Endothelial cell of umbilical vein (primary cell): ENCODE measurements at regions of chr3 and their contacts with region 1.

Region 1: GRCh38 chr3:78204977-78205376 is 1165.1 kb downstream of the ROBO2 start:
- DNase-seq: peak; percentile 65
- H3K4me3 ChIP-seq: no peak overlapping the region
- H3K27ac ChIP-seq: peak overlapping the region; percentile 10
- H3K4me1 ChIP-seq: peaks cover 4% of the 10 kb centered on the region
- H3K27me3 ChIP-seq: no peaks in the 10 kb centered on the region
- CTCF ChIP-seq: peak; percentile 9 to 37
- POLR2A ChIP-seq: no peak

Region 2: DNA sequence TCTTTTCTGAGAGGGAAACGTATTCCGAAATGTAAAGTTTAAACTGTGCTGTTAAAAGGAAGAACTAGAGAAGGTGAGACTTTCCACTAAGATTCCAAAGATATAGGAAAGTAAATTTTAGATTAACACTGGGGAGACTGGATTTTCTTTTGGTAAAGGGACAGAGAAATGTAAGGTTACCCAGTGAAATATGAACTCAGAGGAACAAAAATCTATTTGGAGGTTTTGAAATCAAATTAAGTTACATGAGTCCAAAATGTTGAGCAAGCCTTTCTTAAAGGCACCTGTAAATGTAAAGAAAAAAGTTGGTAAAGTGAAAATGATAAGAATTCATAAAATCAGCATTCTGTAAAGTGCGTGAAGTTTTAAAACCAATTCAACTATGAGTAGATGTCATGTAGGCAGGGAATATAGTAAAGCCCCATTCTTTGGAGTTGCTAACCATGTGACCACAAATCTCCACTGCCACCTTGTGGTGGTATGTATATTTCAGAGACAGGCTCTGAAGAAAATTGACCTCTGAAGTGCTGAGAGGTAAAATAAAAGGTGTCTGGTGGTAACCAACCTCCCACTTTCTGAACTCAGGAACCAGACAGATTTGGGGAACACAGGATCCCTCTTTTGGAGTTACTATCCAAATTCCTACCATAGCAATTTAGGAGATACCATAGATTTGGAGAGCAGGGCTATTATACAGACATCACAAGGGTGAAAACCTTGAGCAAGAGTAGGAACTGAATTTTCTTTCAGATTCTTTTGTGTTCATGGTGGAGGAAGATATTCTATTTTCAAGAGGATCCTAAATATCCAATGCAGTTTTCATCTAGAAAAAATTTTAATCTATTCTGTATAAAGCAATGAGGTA is 949.8 kb before region 1 on chr3:
- CTCF ChIA-PET with region 1: no interaction called
- POLR2A ChIA-PET with region 1: no interaction called
- dilution Hi-C with region 1: no loop called
- intact Hi-C with region 1: loop called (anchors 5 kb)
- DNase-seq: peak; percentile 26
- H3K4me3 ChIP-seq: no peak overlapping the region
- H3K27ac ChIP-seq: no peak overlapping the region
- H3K4me1 ChIP-seq: no peaks in the 10 kb centered on the region
- H3K27me3 ChIP-seq: no peaks in the 10 kb centered on the region
- CTCF ChIP-seq: peak; percentile 44 to 47
- POLR2A ChIP-seq: no peak

Region 3: DNA sequence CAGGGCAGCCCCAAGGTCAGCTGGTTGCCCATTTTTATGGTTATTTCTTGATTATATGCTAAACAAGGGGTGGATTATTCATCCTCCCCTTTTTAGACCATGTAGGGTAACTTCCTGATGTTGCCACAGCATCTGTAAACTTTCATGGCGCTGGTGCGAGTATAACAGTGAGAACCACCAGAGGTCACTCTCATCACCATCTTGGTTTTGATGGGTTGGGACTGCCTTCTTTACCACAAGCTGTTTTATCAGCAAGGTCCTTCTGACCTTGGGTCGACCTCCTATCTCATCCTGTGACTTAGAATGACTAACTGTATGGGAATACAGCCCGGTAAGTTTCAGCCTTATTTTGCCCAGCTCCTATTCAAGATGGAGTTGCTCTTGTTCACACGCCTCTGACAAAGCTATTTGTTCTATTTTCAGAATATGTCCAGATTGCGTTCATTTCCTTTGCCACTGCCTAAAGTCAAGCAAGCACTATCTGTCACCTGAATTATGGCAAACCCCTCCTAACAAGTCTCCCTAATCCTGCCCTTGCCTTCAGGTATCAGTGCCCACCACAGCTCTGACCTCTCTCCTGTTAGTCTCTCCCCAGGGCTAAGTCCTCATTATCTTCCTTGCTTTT is 856.6 kb before region 1 on chr3:
- CTCF ChIA-PET with region 1: interaction called, 48 read pairs
- POLR2A ChIA-PET with region 1: no interaction called
- dilution Hi-C with region 1: no loop called
- intact Hi-C with region 1: loop called (anchors 1 kb)
- DNase-seq: peak; percentile 9
- H3K4me3 ChIP-seq: no peak overlapping the region
- H3K27ac ChIP-seq: no peak overlapping the region
- H3K4me1 ChIP-seq: no peaks in the 10 kb centered on the region
- H3K27me3 ChIP-seq: no peaks in the 10 kb centered on the region
- CTCF ChIP-seq: peak; percentile 25 to 27
- POLR2A ChIP-seq: no peak

Region 4: DNA sequence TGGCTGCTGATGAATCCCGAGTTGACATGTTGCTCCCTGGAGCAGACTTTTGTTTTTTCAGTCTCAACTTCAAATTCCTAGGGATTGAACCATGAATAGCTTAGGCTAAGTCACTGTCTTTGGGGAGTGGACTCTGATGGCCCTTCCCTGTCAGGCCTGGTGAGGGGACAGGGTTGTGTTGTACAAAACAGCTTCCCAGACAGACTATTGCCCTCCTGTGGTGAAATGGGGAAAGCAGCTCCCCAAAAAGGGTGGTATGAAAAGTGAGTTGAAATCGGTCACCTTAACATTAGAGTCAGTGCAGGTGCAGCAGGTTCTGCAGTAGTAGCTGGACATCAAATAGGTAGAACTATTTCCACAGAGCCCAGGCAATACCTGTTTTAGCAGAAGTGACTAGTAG is 389.5 kb before region 1 on chr3:
- CTCF ChIA-PET with region 1: no interaction called
- POLR2A ChIA-PET with region 1: no interaction called
- dilution Hi-C with region 1: no loop called
- intact Hi-C with region 1: loop called (anchors 5 kb)
- DNase-seq: no peak
- H3K4me3 ChIP-seq: no peak overlapping the region
- H3K27ac ChIP-seq: no peak overlapping the region
- H3K4me1 ChIP-seq: peaks cover 7% of the 10 kb centered on the region
- H3K27me3 ChIP-seq: no peaks in the 10 kb centered on the region
- CTCF ChIP-seq: peak in 1 of 2 donors; percentile 6
- POLR2A ChIP-seq: no peak

Region 5: GRCh38 chr3:78139166-78139565 is 65.8 kb before region 1 on chr3:
- CTCF ChIA-PET with region 1: interaction called, 10 read pairs
- POLR2A ChIA-PET with region 1: interaction called, 3 read pairs
- dilution Hi-C with region 1: no loop called
- intact Hi-C with region 1: loop called (anchors 1 kb)
- DNase-seq: peak; percentile 71
- H3K4me3 ChIP-seq: no peak overlapping the region
- H3K27ac ChIP-seq: peak overlapping the region; percentile 67
- H3K4me1 ChIP-seq: peaks cover 53% of the 10 kb centered on the region
- H3K27me3 ChIP-seq: no peaks in the 10 kb centered on the region
- CTCF ChIP-seq: no peak
- POLR2A ChIP-seq: no peak